ENCODE measurements at regions of chr3 and their contacts with region 1.

Region 1: GRCh38 chr3:73100741-73101559 is 39.5 kb downstream of the EBLN2 start:
- DNase-seq: peak; percentile 89
- H3K4me3 ChIP-seq: no peak overlapping the region
- H3K27ac ChIP-seq: no peak overlapping the region
- H3K4me1 ChIP-seq: no peaks in the 10 kb centered on the region
- H3K27me3 ChIP-seq: no peaks in the 10 kb centered on the region
- CTCF ChIP-seq: peak; percentile 91 to 95 (median 93)
- POLR2A ChIP-seq: no peak

Region 2: DNA sequence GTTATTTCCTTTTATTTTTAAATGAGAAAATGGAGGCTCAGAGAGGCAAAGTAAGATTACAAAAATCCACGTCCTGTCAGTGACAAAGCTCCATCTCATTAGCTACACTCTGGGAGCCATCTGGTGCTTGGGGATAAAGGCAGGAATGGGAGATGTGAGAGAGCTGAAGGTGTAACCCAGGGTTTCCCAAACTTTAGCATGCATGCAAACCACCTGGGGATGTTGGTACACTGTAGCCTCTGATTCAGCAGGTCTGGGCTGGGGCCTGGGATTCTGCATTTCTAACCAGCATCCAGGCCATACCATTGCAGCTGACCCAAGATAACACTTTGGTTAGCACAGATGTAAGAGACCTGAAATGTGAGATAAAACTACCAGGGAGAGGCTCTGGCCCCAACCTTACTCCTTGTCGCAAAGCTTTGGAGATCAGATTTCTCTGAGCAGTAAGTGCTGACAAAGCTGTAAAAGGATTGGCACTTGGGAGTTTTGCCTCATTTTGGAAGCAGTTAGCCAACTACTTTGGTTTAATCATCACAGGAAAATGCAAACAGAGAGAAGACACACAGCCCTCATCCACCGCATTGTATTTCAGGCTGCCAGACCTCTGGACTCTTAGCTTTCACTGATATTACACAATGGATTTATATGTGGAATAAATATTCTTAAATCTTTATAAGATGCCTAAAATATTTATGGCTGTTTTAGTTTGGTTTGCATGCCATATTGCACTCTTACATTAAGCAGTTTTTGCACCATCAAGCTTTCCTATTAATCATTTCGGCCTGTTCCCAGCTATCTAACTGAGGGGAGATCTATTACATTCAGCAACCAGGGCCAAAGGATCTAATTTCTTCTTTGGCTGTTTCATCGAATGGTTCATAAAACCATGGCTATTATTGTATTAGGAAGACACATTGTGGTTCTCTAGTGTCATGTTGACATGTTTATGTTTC is 223.5 kb after region 1 on chr3:
- intact Hi-C with region 1: loop called (anchors 10 kb)
- DNase-seq: no peak
- H3K4me3 ChIP-seq: no peak overlapping the region
- H3K27ac ChIP-seq: no peak overlapping the region
- H3K4me1 ChIP-seq: no peaks in the 10 kb centered on the region
- H3K27me3 ChIP-seq: no peaks in the 10 kb centered on the region
- CTCF ChIP-seq: no peak
- POLR2A ChIP-seq: no peak

Region 3: DNA sequence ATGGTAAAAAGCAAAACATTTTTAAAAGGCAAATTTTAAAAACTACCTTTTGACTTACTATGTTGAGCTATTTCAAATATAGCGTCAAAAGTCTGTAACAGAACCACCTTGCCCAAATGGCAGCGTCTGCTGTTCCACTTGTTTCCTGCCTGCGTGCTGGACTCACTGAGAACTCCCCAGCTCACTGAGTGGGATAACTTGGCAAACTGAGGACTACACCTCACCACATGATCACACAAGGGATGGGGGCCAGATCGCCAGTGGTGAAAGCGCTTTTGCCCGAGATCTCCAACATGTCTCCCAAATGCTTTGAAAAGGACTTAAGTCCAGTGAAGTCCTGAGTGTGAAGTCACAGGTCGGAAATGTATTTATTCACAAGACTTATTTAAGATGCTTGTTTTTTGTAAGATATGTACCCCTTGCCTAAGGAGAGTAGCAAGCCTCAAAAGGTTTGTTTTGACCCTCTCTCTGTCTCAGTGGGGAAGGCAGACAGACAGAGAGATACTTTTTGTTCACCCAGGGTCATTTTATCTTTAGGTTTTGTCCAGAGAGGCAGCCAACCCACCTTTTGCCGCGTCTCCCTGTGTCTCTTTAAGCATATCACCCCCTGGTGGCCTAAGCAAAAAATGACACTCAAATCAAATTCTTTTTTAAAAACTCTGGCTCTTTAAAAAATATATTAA is 331.2 kb after region 1 on chr3:
- intact Hi-C with region 1: loop called (anchors 5 kb)
- DNase-seq: no peak
- H3K4me3 ChIP-seq: no peak overlapping the region
- H3K27ac ChIP-seq: peak overlapping the region in 1 of 2 donors; percentile 3
- H3K4me1 ChIP-seq: peaks cover 3% of the 10 kb centered on the region
- H3K27me3 ChIP-seq: no peaks in the 10 kb centered on the region
- CTCF ChIP-seq: peak; percentile 34 to 69 (median 54)
- POLR2A ChIP-seq: no peak

Region 4: GRCh38 chr3:73502609-73503583 is 401.9 kb after region 1 on chr3:
- intact Hi-C with region 1: loop called (anchors 1 kb)
- DNase-seq: peak; percentile 77
- H3K4me3 ChIP-seq: no peak overlapping the region
- H3K27ac ChIP-seq: peak overlapping the region; percentile 66
- H3K4me1 ChIP-seq: peaks cover 15% of the 10 kb centered on the region
- H3K27me3 ChIP-seq: no peaks in the 10 kb centered on the region
- CTCF ChIP-seq: peak; percentile 68 to 91 (median 80)
- POLR2A ChIP-seq: no peak

Region 5: GRCh38 chr3:73848173-73848906 is 747.4 kb after region 1 on chr3:
- intact Hi-C with region 1: loop called (anchors 5 kb)
- DNase-seq: no peak
- H3K4me3 ChIP-seq: no peak overlapping the region
- H3K27ac ChIP-seq: no peak overlapping the region
- H3K4me1 ChIP-seq: no peaks in the 10 kb centered on the region
- H3K27me3 ChIP-seq: no peaks in the 10 kb centered on the region
- CTCF ChIP-seq: peak; percentile 43 to 77 (median 64)
- POLR2A ChIP-seq: no peak

Measured in prostate gland (tissue), 2 donors.